Psoas muscle (tissue), 8 donors: ENCODE measurements at regions of chr7 and their contacts with region 1.

Region 1: DNA sequence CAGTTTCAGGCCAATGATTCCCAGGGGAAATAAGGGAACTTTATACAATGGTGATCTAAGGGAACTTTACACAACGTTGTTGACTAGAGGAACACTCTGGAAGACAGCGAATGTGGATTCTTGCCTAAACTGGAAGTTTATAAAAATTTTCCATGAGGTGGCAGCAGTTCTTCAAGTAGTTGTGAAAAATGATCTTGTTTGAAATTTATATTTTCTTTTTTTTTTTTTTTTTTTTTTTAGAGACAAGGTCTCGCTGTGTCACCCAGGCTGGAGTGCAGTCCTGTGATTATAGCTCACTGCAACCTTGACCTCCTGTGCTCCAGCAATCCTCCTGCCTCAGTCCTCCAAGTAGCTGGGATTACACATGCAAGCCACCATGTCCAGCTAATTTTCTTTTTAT is 32.1 kb upstream of the GTF2I start:
- DNase-seq: no peak
- ATAC-seq: peak in 1 of 4 donors; percentile 29
- H3K4me3 ChIP-seq: no peak overlapping the region
- H3K27ac ChIP-seq: no peak overlapping the region
- H3K4me1 ChIP-seq: peaks cover 18% of the 10 kb centered on the region
- H3K27me3 ChIP-seq: no peaks in the 10 kb centered on the region
- CTCF ChIP-seq: no peak

Region 2: DNA sequence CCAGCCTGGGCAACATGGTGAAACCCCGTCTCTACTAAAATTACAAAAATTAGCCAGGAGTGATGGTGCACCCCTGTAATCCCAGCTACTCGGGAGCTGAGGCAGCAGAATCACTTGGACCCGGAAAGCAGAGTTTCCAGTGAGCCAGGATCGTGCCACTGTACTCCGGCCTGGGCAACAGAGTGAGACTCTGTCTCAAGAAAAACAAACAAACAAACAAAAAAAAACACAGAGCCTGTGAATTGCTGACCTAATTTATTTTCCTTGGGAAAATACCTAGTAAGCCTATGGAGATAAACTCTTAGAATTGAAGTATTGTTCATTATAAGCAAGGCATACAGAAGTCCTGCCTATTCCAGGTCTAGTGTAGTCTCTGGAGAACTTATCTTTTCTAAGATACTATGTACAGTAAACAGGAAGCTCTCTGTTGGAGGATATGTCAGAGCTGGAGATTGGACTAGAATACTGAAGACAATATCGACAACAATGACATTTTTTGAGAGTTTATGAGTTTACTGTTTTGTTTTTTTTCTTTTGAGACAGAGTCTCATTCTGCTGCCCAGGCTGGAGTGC is 47.0 kb after region 1 on chr7:
- intact Hi-C with region 1: loop called in 1 of 2 experiments (anchors 5 kb)
- DNase-seq: no peak
- ATAC-seq: no peak
- H3K4me3 ChIP-seq: no peak overlapping the region
- H3K27ac ChIP-seq: peak overlapping the region; percentile 69
- H3K4me1 ChIP-seq: peaks cover 53% of the 10 kb centered on the region
- H3K27me3 ChIP-seq: no peaks in the 10 kb centered on the region
- CTCF ChIP-seq: no peak